WTC11 (cell line): ENCODE measurements at regions of chr15 and their contacts with region 1.

Region 1: DNA sequence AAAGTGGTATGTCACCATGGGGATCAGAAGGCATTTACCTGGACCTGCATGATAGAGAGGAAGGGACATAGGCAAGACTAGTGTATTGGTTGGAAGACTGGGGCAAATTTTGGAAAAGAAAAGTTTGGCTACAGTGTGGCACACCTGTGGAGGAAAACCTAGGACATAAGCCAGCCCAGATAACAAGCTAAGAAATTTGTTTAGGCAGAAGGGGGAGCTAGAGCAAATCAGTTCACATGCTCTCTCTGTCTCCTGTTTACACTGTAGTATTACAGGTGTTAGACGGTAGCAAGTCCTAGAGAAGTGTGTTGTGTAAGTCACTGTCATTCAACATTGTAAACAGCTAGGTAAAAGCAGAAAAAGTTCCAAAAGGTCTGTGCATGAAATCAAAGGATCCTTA is 11.9 kb upstream of the ALDH1A2 start:
- DNase-seq: no peak
- ATAC-seq: peak; percentile 90
- H3K4me3 Mint-ChIP-seq: no peak overlapping the region
- H3K27ac Mint-ChIP-seq: no peak overlapping the region
- H3K4me1 Mint-ChIP-seq: peaks cover 28% of the 10 kb centered on the region
- H3K27me3 Mint-ChIP-seq: peaks cover 5% of the 10 kb centered on the region; the same call in 1 of the 2 replicates
- CTCF ChIP-seq: no peak

Region 2: GRCh38 chr15:58147171-58147611 is 69.8 kb after region 1 on chr15:
- CTCF ChIA-PET with region 1: no interaction called
- POLR2A ChIA-PET with region 1: no interaction called
- DNase-seq: no peak
- ATAC-seq: no peak
- H3K4me3 Mint-ChIP-seq: no peak overlapping the region
- H3K27ac Mint-ChIP-seq: no peak overlapping the region
- H3K4me1 Mint-ChIP-seq: no peaks in the 10 kb centered on the region
- H3K27me3 Mint-ChIP-seq: peaks cover 2% of the 10 kb centered on the region; the same call in 1 of the 2 replicates
- CTCF ChIP-seq: no peak

Region 3: DNA sequence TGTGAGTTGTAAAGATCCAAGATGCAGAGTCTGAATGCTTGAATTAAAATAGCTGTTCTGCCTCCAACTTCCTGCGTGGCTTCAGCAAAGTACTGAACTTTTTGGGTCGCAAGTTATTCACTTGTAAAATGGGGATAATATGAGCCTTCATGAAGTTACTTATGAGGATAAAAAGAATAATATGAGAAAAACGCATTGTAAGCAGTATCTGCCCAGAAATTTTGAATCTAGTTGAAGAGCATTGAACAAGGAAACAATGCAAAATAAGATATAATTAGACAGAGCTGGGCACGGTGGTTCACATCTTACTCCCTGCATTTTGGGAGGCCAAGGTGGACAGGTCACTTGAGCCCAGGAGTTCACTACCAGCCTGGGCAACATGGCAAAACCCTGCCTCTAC is 98.5 kb after region 1 on chr15:
- CTCF ChIA-PET with region 1: interaction called, 13 read pairs
- POLR2A ChIA-PET with region 1: no interaction called
- DNase-seq: no peak
- ATAC-seq: no peak
- H3K4me3 Mint-ChIP-seq: no peak overlapping the region
- H3K27ac Mint-ChIP-seq: no peak overlapping the region
- H3K4me1 Mint-ChIP-seq: no peaks in the 10 kb centered on the region
- H3K27me3 Mint-ChIP-seq: peaks cover 4% of the 10 kb centered on the region; the same call in 1 of the 2 replicates
- CTCF ChIP-seq: no peak

Region 4: DNA sequence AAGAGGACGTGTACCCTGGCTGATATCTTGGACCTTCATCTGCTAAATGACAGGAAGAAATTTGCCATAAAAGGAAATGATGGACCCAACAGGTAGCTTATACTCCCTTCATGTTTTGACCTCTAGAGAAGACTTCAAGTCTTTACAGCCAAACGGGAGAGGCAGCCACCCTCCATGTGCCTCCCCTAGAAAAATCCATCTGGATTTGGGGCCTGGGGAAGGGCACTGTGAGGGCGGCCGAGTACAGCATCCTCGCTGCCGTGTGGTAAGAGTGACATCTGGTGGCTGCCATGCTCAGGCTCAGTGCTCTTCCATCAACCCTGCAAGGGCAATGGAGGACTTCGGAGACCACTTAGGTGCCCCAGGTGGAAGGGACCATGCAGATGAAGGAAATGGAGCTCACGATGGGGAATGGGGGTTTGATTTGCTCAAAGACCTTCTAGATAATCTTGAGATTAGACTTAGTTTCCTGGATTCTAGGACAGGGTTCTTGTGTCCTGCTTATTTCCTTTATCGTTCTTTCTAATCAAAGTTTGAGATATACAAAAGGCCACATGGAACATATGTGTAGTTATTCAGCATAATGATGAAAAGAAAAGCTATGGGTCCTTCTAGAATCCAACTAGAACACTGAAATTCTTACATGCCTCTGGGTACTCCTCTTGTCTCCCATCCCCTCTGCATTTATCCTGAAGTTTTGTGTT is 105.2 kb after region 1 on chr15:
- CTCF ChIA-PET with region 1: interaction called, 15 read pairs
- POLR2A ChIA-PET with region 1: no interaction called
- DNase-seq: peak; percentile 71
- ATAC-seq: peak; percentile 100
- H3K4me3 Mint-ChIP-seq: no peak overlapping the region
- H3K27ac Mint-ChIP-seq: no peak overlapping the region
- H3K4me1 Mint-ChIP-seq: peaks cover 7% of the 10 kb centered on the region; the same call in 1 of the 2 replicates
- H3K27me3 Mint-ChIP-seq: no peaks in the 10 kb centered on the region; the same call in 1 of the 2 replicates
- CTCF ChIP-seq: peak; percentile 62